Mammary epithelial cell (primary cell): ENCODE measurements at regions of chr11 and their contacts with region 1.

Region 1: DNA sequence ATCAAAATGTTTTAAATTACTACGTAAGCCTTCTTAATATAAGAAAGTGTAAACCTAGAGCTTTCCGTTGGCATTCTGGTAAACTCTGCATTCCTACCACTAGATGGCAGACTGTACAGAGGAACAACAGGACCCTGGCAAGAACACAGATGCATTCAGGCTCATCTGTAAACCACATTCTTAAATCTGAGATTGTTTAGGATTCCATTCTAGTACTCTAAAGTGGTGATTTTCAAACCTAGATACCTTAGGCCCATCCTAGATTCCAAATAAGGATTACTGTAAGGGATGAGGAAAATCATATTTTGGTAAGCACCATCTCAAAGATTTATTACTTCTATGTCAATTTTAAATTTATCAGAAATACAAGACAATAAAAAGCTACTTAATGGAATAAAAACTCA is 26.9 kb downstream of the PICALM start:
- DNase-seq: peak; percentile 76
- H3K4me3 ChIP-seq: peak overlapping the region in 1 of 3 experiments; percentile 50
- H3K27ac ChIP-seq: peak overlapping the region; percentile 61
- H3K4me1 ChIP-seq: peaks cover 32% of the 10 kb centered on the region
- H3K27me3 ChIP-seq: no peaks in the 10 kb centered on the region
- CTCF ChIP-seq: peak; percentile 82 to 86

Region 2: DNA sequence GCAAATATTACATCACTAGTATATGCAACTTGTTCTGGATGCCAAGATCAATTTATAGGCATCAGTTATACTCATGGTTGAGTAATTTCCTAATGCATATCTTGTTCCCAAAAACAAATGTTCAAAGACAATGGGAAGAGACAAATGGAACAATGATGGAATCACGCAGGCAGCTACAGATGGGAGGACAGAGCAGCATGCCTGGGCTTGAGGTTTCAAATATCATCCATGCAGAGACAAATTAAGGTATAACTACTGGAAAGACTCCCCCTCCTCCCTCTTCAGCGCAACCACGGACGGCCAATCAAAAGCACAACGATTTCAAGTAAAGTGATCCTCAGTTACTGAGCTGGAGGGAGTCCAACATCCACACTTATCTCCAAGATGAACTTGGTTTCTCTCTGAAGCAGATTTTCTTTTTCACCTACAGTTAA is 80.0 kb before region 1 on chr11:
- CTCF ChIA-PET with region 1: no interaction called
- dilution Hi-C with region 1: no loop called
- in situ Hi-C with region 1: no loop called
- intact Hi-C with region 1: no loop called
- DNase-seq: peak; percentile 39
- H3K4me3 ChIP-seq: no peak overlapping the region
- H3K27ac ChIP-seq: no peak overlapping the region
- H3K4me1 ChIP-seq: peaks cover 4% of the 10 kb centered on the region
- H3K27me3 ChIP-seq: no peaks in the 10 kb centered on the region
- CTCF ChIP-seq: no peak

Region 3: DNA sequence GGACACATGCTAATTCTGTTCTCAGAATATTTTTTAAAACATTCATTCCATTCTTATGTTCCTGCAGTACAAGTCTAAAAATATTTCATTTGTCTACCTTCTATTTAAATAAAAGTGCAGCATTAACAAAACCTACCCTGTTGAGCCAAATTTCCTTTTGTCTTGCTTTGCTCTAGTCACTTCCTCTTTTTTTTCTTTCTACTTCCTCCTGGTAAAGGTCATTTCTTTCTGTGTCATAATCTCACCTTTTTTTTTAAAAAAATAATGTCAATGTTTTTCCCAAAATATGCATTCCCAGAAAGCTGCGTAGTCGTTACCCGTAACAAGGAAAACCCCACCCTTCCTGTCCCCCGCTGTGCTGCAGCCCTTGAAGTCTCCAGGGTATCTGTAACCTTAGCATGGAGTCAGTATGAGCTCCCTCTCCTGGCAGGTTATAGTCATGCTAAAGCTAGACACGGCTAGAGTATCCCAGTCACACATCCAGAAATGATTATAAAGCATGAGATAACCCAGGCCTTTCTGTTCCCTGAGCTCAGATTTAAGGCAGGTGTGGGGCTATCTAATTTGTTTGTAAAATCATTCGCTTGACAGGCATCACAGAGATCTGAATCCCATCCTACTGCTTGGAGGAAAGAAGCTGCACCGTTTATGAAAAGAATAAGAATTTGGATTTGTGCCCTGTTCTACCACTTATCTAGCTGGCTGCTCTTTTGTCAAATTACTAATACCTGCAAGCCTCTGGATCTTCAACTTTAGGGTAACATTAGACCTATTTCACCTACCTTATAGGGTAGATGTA is 151.5 kb after region 1 on chr11:
- CTCF ChIA-PET with region 1: interaction called, 9 read pairs
- dilution Hi-C with region 1: no loop called
- in situ Hi-C with region 1: no loop called
- intact Hi-C with region 1: loop called (anchors 1 kb)
- DNase-seq: peak; percentile 69
- H3K4me3 ChIP-seq: peak overlapping the region in 2 of 3 experiments; percentile 14 to 18
- H3K27ac ChIP-seq: peak overlapping the region; percentile 5
- H3K4me1 ChIP-seq: peaks cover 7% of the 10 kb centered on the region
- H3K27me3 ChIP-seq: no peaks in the 10 kb centered on the region
- CTCF ChIP-seq: peak; percentile 82 to 89

Region 4: DNA sequence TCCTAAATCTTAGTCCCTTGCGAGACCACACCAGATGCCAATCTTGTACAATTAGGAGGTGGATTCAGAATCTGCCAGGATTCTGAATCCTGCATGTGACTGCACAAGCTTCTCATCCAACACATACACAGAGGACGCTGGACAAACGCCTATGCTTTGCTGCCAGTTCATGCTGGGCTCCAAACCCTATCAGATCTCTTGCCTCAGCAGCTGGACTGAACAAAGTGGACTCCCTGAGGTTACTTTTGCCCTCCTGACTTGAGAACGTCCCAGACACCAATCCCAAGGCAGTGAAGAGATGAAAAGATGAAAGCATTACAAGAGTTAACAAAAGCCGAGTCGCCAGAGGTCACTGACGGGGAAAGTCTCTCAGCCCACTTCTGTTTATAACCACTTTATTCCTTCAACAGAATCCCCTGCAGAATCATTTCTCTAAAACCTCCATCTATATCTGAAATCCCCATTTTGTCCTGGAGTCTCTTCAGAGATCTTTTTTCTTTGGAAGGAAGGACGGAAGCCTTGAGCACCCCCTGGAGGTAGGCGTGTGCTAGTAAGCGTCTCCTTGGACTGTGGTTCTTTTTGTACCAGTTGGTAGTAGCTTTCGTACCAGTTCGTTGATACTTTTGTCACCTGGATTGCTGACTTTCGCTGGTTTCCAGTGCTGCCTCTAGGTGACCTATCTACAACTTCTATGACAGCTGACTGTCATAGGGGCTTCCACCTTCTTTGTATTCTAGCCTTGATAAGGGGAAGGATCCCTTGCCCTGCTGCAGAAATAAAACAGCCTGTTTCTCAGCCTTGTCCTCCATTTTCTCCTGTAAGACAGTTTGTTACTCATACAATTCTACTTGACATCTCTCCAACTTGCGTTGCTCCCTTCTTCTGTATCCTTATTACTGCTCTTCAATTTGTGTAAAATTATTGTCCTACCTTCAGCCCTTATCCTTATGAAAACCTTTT is 176.4 kb after region 1 on chr11:
- CTCF ChIA-PET with region 1: no interaction called
- dilution Hi-C with region 1: no loop called
- in situ Hi-C with region 1: loop called (anchors 5 to 25 kb)
- intact Hi-C with region 1: loop called (anchors 1 kb)
- DNase-seq: peak; percentile 55
- H3K4me3 ChIP-seq: peak overlapping the region in 1 of 3 experiments; percentile 4
- H3K27ac ChIP-seq: no peak overlapping the region
- H3K4me1 ChIP-seq: no peaks in the 10 kb centered on the region
- H3K27me3 ChIP-seq: no peaks in the 10 kb centered on the region
- CTCF ChIP-seq: peak; percentile 92 to 95

Region 5: DNA sequence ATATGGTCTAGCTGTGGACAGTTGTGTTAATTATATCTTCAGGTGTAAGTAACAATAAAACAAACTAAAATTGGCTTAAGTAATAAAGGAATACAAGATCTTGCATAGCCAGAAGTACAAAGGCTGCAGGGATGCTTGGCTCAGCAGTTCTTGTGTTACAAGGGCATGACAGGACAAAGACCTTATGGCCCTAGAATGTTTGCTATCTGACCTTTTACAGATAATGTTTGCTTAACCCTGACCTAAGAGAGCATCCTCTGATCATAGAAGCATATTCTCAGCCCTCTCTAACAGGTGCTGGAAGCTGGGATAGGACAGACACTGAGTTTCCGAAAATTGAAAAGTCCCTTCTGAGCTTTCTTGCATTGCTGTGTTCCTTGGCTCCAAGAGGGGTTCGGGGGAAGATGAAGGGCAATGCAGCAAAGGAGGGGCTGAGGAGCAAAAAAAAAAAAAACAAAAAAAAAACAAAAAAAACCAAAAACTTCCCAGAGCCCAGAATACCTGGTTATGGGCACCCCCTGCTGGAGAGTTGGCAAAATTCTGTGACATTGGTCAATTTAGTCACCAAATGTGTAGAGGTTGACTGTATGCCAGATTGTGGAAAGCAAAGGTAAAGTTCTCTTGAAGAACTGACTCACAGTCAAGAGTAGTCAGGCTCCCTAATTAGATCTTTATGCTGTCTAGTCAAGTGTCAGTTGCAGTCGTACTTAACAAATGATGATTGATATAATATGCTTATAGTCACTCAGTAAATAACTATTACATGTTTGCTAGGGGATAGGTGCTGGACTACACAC is 249.7 kb after region 1 on chr11:
- CTCF ChIA-PET with region 1: no interaction called
- dilution Hi-C with region 1: no loop called
- in situ Hi-C with region 1: no loop called
- intact Hi-C with region 1: loop called (anchors 5 kb)
- DNase-seq: peak; percentile 70
- H3K4me3 ChIP-seq: no peak overlapping the region
- H3K27ac ChIP-seq: no peak overlapping the region
- H3K4me1 ChIP-seq: no peaks in the 10 kb centered on the region
- H3K27me3 ChIP-seq: no peaks in the 10 kb centered on the region
- CTCF ChIP-seq: peak; percentile 71 to 79

Region 6: GRCh38 chr11:86740709-86741483 is 698.9 kb after region 1 on chr11:
- CTCF ChIA-PET with region 1: no interaction called
- dilution Hi-C with region 1: no loop called
- in situ Hi-C with region 1: no loop called
- intact Hi-C with region 1: no loop called
- DNase-seq: peak; percentile 88
- H3K4me3 ChIP-seq: no peak overlapping the region
- H3K27ac ChIP-seq: peak overlapping the region; percentile 85
- H3K4me1 ChIP-seq: peaks cover 65% of the 10 kb centered on the region
- H3K27me3 ChIP-seq: no peaks in the 10 kb centered on the region
- CTCF ChIP-seq: no peak